Esophagus muscularis mucosa (tissue), 4 donors: ENCODE measurements at regions of chr12 and their contacts with region 1.

Region 1: DNA sequence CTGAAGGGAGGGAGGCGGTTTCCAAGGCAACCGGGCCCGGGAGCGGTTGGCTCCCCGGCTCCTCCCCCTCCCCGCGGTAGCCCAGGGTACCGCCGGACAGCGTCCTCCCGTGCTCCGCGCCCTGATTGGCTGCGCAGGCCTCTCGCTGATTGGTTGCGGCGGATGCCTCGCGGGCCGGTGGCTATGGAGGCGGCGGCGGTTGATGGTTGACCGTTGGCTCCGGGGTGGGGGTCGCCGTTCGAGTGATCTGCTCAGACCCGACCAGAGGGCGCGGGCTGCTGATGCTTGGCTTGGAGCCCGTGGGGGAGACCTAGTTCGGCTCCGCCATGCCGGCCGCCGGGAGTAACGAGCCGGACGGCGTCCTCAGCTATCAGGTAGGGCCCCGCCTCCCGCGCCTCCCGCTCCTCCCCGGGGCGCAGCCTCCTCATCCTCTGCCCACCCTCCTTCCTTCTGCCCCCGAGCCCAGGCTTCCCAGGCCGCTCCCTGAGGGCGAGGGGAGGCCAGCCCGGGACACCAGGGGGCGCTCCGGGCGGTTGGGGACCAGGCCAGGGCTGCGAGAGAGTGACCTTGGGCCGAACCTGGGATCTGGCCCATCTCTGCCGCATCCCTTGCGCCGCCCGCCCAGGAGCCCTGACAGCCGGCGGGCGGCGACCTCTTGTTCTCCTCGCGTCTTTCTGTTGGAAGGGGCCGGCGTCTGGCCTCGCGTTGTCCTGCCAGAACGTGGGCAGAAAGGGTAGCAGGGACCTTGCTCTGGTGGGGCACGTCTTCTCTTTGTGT is at the start of gene SLC4A8:
- DNase-seq: peak; percentile 92
- H3K4me3 ChIP-seq: peak within 1 kb of the TSS; percentile 58 to 72 (median 62)
- H3K27ac ChIP-seq: peak within 1 kb of the TSS in 3 of 4 donors; percentile 16 to 27 (median 19)
- H3K4me1 ChIP-seq: peaks cover 0 to 14% (median 12%) of the 10 kb centered on the region in 4 donors
- H3K27me3 ChIP-seq: peaks cover 0 to 10% (median 0%) of the 10 kb centered on the region in 4 donors
- CTCF ChIP-seq: peak; percentile 53 to 68 (median 58)
- EP300 ChIP-seq: no peak
- POLR2A ChIP-seq: no peak
- total RNA-seq, gene SLC4A8: 0.46 to 1.7 (median 0.90) TPM

Region 2: DNA sequence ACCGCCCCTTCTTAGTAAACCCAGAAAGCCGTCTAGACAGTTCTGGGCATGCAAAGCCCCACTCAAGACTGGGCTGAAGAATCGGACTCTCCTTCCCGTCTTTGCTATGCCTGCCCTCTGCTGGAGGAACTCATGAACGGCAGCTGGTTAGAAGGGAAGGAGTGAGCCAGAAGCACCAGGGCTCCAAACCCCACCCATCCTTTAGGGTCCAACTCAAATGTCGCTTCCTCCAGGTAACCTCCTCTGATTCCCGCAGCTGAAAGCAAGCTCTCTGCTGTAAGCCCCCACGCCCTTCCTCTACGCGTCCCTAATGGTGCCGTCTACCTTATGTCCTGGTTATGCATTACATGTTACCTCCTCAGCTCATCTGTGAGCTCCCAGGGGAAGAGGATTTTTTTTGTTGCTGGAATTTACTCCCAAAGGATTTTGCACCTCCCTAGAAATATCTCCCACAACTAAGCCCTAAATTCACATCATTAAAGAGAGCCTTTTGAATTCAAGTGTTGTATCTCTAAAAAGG is 107.2 kb after region 1 on chr12:
- intact Hi-C with region 1: loop called (anchors 5 kb)
- DNase-seq: no peak
- H3K4me3 ChIP-seq: no peak overlapping the region
- H3K27ac ChIP-seq: no peak overlapping the region
- H3K4me1 ChIP-seq: peaks cover 0 to 4% (median 0%) of the 10 kb centered on the region in 4 donors
- H3K27me3 ChIP-seq: peaks cover 0 to 46% (median 3%) of the 10 kb centered on the region in 4 donors
- CTCF ChIP-seq: peak; percentile 76 to 93 (median 79)
- EP300 ChIP-seq: no peak
- POLR2A ChIP-seq: no peak

Region 3: DNA sequence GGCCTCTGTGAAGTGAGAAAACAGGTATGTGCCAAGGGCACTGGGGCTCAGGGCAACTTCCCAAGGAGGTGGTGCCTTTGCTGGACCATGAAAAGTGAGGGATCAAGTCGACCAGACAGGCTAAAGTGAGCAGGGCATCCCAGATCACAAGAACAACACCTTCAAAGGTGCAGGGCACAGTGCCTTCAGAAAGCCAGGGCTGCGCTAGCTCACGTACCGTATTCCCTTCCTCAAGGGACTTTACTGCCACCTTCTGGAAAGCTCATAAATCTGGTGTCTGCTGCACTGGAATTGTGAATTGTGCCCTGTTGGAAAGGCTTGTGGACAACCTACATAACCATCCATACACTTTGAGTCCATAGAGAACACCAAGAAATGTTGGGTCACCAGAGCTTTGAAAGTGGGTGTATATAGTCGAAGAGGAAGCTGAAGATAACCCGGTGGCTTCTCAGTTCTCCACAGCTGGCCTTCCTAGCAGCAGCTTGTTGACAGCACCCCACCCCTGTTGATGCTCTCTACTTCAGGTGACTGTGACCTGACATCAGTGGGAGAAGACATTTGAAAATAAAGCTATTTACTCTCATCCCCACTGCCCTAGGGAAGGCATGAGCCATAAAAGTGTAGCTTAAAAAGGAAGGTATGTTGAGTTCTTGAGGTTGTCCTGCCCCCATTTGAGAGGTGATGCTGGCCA is 399.2 kb after region 1 on chr12:
- intact Hi-C with region 1: loop called (anchors 10 kb)
- DNase-seq: no peak
- H3K4me3 ChIP-seq: no peak overlapping the region
- H3K27ac ChIP-seq: no peak overlapping the region
- H3K4me1 ChIP-seq: peaks cover 9 to 25% (median 20%) of the 10 kb centered on the region in 4 donors
- H3K27me3 ChIP-seq: peaks cover 0 to 54% (median 10%) of the 10 kb centered on the region in 4 donors
- CTCF ChIP-seq: peak; percentile 11 to 35 (median 33)
- EP300 ChIP-seq: no peak
- POLR2A ChIP-seq: no peak